ENCODE measurements at regions of chr5 and their contacts with region 1.

Region 1: DNA sequence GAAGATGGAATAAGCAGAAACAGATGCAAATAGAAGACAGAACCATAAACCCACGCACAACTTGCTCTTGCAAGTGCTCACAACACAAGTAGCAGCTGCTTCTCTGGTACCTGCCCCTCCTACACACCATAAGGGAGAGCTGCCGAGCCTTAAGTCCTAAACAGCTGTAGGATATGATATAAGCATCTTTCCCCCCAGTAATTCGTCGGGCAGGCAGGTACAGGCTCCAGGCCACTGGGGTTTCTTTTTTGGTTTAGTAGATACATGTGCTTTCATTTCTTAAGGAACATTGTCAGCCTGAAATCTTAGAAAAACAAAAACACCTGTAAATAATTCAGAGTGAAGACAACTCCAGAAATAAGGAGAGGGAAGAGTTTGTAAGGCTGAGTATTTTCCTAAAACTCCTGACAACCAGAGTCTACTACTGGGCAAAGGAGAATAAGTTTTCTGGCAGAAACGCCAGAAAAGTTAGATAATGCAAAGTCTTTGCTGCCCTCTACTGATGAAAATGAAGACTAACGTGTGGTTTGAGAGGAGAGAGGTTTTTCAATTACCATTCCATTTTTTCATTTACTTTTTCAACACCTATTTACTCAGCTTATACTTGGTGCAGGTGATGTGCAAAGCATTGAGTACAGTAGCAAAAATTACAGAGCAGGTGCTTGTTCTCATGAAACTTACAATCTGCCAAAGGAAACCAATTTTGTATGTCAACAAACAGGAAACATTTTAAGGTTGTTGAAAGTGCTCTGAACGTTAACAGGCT is 20.1 kb upstream of the TCERG1 start:
- DNase-seq: no peak
- H3K4me3 ChIP-seq: no peak overlapping the region
- H3K27ac ChIP-seq: no peak overlapping the region
- H3K4me1 ChIP-seq: peaks cover 0 to 4% of the 10 kb centered on the region in 2 donors
- H3K27me3 ChIP-seq: no peaks in the 10 kb centered on the region
- CTCF ChIP-seq: peak; percentile 29 to 67 (median 50)
- POLR2A ChIP-seq: no peak

Region 2: DNA sequence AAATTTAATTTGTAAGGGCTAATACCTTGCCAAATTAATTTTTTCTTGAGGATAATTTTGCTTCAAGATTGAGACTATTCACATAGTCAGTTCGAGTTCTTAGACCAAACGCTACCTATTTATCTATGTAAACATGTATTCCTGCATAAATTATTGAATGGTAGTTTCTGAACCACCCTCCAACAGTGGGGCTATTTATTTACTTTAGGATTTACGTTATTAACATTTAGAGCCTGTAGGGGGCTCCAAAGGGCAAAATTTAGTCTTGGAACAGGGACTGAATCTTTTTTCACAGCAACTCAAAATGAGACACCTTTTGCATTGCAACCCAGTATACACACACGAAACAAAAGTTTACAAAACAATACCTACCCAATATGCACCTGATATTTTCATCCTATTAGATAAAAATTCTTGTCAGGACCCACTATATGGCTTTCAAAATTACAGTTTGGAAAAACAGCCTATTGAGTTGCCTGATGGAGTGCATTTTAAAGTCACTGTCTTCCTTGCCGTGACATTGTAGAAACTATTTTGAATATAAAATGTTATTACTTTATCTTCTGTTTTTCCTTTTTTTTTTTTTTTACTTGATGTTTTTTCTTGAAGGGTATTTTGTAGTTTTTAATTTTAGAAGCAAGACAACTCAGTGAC is 135.5 kb before region 1 on chr5:
- intact Hi-C with region 1: loop called (anchors 10 kb)
- DNase-seq: no peak
- H3K4me3 ChIP-seq: no peak overlapping the region
- H3K27ac ChIP-seq: no peak overlapping the region
- H3K4me1 ChIP-seq: no peaks in the 10 kb centered on the region
- H3K27me3 ChIP-seq: no peaks in the 10 kb centered on the region
- CTCF ChIP-seq: peak in 4 of 6 experiments; percentile 20 to 58 (median 48)
- POLR2A ChIP-seq: no peak

Region 3: DNA sequence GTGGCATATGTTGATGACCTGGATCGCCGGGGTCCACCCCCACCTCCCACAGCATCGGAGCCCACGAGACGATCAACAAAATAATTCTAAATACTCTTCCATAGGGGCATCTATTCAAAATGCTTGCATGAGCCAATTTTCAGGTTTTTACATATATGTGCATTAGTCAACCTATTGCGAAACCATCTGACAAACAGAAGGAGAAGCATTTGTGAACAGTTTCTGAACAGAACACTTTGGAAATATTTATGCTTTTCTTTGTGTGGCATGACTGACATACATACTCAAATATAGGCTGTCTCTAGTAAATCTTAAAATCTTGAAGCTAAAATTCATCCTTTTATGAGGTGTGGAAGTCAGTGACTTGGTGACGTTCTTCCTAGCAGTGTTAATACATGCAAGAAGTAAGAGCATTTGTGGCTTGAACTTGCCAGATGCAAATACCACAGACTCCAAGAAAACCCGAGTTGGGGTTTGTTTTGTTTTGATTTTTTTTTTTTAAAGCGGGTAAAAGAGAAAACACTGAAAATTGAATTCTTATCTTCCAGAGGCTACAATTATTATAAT is 83.6 kb after region 1 on chr5:
- intact Hi-C with region 1: no loop called
- DNase-seq: no peak
- H3K4me3 ChIP-seq: no peak overlapping the region
- H3K27ac ChIP-seq: no peak overlapping the region
- H3K4me1 ChIP-seq: no peaks in the 10 kb centered on the region
- H3K27me3 ChIP-seq: no peaks in the 10 kb centered on the region
- CTCF ChIP-seq: no peak
- POLR2A ChIP-seq: no peak